ENCODE measurements at regions of chr20 and their contacts with region 1.

Region 1: DNA sequence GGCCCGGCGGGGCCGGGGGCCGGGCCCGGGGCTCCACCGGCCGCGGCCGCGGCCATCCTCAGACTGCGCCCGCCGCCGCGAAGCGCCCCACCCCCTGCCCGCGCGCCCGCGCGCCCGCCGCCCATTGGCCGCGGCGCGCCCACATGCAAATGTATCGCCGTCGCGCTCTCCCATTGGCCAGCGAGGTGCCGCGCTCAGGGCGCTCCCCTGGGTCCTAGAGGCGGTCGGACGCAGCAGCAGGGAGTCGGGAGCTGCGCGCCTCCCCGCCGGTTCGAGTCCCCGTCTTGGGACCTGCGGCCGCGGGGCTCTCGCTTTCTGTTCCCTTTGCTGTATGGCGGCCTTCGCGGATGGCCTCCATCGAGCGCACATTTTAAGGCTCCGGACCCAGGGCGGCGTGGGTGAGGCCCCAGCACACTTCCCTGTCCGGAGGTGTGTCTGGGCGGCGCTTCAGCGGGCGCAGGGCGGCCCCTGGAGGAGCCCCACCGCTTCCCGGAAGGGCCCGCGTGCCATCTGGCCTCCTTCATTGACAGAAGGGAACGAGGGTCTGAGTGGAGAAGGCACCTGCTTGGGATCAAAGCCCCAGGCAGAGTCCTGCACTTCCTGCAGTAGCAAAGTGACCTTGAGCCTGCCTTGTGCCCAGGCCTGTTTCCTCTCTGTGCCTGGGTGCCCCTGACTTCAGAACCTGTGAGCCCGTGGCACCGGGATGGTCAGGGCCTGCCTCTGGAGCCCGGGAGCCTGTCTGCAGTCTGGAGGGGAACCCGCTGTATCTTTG is at the start of gene CABLES2:
- DNase-seq: peak; percentile 87 to 96
- H3K4me3 ChIP-seq: peak within 1 kb of the TSS; percentile 69 to 81
- H3K27ac ChIP-seq: peak within 1 kb of the TSS; percentile 48 to 72
- H3K4me1 ChIP-seq: peaks cover 10 to 24% of the 10 kb centered on the region in 2 donors
- H3K27me3 ChIP-seq: no peaks in the 10 kb centered on the region
- CTCF ChIP-seq: peak in 1 of 3 experiments; percentile 25
- total RNA-seq, gene CABLES2: 0.43 TPM

Region 2: DNA sequence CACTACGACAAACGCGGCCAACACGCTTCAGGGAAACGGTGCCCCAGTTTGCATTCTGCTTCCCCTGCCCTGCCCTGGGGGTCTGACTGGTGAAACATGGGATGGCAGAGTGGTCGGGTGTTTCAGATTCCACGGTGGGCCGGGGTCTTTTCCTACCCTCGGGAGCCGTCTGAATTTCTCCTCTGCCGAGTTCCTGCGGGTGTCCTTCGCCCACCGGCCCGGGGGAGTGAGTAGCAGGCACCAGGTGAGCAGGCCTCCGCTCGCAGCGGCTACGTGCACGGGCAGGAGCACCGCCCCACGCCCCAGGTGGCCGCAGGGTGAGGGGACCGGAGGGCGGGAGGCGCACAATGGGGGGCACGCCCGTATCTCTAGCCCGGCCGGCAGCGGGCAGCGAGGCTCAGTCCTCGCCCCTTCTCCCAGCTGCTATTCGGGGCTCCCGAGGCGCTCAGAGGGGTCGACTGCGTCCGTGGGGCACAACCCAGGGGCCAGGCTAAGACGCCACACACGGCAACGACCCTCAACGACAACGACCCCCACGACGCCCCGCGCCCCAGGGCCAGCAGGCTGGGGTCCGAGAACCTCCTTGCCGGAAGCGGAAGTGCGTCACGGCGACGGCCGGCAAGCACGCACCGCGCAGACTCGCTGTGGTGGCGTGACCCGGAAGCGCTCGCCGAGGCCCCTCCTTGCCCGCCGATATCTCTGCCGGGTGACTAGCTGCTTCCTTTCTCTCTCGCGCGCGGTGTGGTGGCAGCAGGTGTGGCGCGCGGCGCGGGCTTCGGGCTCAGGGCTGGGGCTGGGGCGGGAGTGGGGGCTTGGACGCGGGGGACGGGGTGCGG is 20.8 kb before region 1 on chr20 and contains the start of gene RPS21:
- intact Hi-C with region 1: loop called (anchors 1 kb)
- DNase-seq: peak; percentile 57 to 96
- H3K4me3 ChIP-seq: peak within 1 kb of the TSS; percentile 81 to 93
- H3K27ac ChIP-seq: peak within 1 kb of the TSS; percentile 93 to 94
- H3K4me1 ChIP-seq: peaks cover 15% of the 10 kb centered on the region in 2 donors
- H3K27me3 ChIP-seq: no peaks in the 10 kb centered on the region
- CTCF ChIP-seq: no peak
- total RNA-seq, gene RPS21: 1,828 TPM

Measured in ascending aorta (tissue), 2 donors.